Thyroid gland (tissue), 4 donors: ENCODE measurements at regions of chr7 and their contacts with region 1.

Region 1: DNA sequence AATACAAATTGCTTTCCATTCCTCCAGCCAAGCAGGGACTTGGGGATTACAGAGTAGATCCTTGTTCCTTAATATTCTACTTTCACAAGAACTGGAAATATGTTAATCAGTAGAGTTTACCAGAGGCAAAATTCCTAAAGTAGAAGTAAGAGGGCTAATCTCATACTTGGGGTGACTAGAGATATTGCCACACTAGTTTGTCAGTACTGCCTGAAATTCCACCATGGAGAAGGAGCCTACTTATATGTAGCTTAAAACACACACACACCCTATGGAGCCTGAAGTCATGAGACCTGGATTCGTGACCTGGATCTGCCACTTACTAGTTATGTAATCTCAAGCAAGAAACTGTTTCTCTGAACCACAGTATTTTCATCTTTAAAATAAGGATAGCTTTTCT is 33.9 kb downstream of the STRIP2 start:
- DNase-seq: peak; percentile 12 to 17
- H3K4me3 ChIP-seq: no peak overlapping the region
- H3K27ac ChIP-seq: peak overlapping the region; percentile 52 to 56 (median 54)
- H3K4me1 ChIP-seq: peaks cover 8% of the 10 kb centered on the region in 2 donors
- H3K27me3 ChIP-seq: no peaks in the 10 kb centered on the region
- CTCF ChIP-seq: no peak
- POLR2A ChIP-seq: no peak

Region 2: DNA sequence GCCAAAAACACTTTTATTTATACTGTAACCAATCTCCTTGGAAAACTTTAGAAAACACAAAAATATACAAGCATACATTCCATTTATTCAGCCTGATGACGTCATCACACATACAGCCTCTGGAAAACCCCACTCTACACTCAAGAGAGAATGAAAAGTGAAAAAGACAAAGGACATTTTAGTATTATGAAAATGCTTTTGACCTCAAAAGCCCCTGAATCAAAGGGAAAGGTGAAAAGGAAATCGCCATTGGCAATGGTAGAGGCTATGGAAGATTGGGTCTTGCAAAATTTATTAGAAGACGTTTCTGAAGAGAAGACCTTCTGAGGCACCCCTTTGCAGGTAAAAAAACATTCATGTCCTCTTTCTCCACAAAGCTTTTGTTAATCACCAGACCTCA is 116.8 kb before region 1 on chr7:
- intact Hi-C with region 1: loop called (anchors 10 kb)
- DNase-seq: no peak
- H3K4me3 ChIP-seq: no peak overlapping the region
- H3K27ac ChIP-seq: no peak overlapping the region
- H3K4me1 ChIP-seq: no peaks in the 10 kb centered on the region
- H3K27me3 ChIP-seq: no peaks in the 10 kb centered on the region
- CTCF ChIP-seq: no peak
- POLR2A ChIP-seq: no peak